ENCODE measurements at regions of chr10 and their contacts with region 1.

Region 1: GRCh38 chr10:21732067-21732772 is 198.2 kb downstream of the MLLT10 start:
- DNase-seq: peak; percentile 44
- ATAC-seq: peak; percentile 95
- H3K4me3 ChIP-seq: no peak overlapping the region
- H3K27ac ChIP-seq: no peak overlapping the region
- H3K4me1 ChIP-seq: peaks cover 5 to 19% of the 10 kb centered on the region in 2 experiments
- H3K27me3 ChIP-seq: no peaks in the 10 kb centered on the region
- CTCF ChIP-seq: peak; percentile 68 to 95 (median 94)
- POLR2A ChIP-seq: no peak
- RAD21 ChIP-seq: peak; percentile 93

Region 2: DNA sequence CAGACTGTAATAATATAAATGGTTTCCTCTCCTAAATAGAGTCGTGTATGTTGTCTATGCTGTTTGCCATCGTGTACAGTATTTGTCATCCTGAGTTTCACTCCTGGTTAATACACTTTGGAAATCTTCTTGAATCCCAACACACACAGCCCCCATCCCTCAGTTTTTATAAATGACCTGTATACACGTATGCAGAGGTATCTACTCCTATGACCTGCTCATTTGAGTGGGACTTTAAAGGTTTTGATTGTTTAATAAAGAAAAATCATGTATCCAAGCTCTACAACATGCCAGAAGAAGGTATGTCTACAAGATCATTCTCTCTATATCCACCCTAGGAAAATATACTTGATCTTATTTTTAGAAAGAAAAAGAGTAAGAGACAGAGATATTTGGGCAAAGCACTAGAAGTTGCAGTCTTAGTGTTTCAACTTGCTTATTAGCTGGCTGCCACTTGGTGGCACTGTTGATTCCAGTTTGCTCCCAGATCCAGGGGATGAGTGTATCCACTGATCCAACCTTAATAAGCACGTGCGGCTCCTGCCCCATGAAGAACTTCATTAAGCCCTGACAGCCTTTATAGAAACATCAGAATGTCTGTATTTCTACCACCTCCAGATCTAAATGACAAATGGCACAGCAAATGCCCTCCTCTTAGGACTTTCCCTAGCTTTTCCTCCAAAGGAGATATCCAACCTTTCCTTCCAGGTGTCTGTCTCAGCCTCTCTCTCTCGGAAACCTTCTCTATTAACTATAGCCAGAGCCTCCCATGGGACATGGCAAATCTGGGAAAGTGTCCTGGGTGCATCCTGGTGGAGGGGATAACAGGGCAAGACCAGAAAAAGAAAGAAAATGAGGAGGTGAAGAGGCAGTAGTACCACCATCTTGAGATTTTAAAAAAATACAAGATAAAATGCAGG is 653.5 kb before region 1 on chr10:
- CTCF ChIA-PET with region 1: no interaction called
- POLR2A ChIA-PET with region 1: no interaction called
- RAD21 ChIA-PET with region 1: no interaction called
- intact Hi-C with region 1: loop called (anchors 5 kb)
- DNase-seq: peak; percentile 58
- ATAC-seq: peak; percentile 98
- H3K4me3 ChIP-seq: no peak overlapping the region
- H3K27ac ChIP-seq: no peak overlapping the region
- H3K4me1 ChIP-seq: peaks cover 0 to 6% of the 10 kb centered on the region in 2 experiments; a peak in 2 of 4 replicates
- H3K27me3 ChIP-seq: no peaks in the 10 kb centered on the region
- CTCF ChIP-seq: peak; percentile 64 to 84 (median 79)
- POLR2A ChIP-seq: no peak
- RAD21 ChIP-seq: peak; percentile 87

Region 3: GRCh38 chr10:21292763-21293517 is 439.3 kb before region 1 on chr10:
- CTCF ChIA-PET with region 1: no interaction called
- POLR2A ChIA-PET with region 1: no interaction called
- RAD21 ChIA-PET with region 1: no interaction called
- intact Hi-C with region 1: loop called (anchors 5 kb)
- DNase-seq: peak; percentile 95
- ATAC-seq: peak; percentile 91
- H3K4me3 ChIP-seq: peak overlapping the region; percentile 9 to 32
- H3K27ac ChIP-seq: peak overlapping the region; percentile 66
- H3K4me1 ChIP-seq: peaks cover 35 to 40% of the 10 kb centered on the region in 2 experiments
- H3K27me3 ChIP-seq: no peaks in the 10 kb centered on the region
- CTCF ChIP-seq: no peak
- POLR2A ChIP-seq: no peak
- RAD21 ChIP-seq: peak; percentile 29

Region 4: DNA sequence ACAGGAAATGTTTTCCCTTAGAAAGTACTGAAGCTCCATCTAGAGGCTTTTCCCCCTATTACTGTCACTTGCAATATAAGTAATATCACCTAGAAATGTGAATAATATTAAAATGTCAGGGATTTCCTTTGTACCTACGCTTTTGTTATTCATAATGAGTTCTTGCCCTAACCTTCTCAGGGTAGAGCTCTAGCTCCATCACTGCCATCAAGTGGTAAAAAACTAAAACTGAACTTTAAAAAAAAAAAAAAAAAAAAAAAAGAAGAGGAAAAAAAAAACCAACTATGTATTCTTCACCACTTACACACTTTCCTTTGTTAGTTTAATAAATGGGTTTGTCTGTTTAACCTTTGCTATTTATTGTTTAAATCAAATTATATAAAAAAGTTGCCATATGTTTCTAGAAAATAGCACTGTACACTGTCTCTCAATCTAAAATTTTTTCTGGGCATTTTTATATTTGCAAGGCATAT is 221.4 kb after region 1 on chr10:
- CTCF ChIA-PET with region 1: interaction called, 4 read pairs
- POLR2A ChIA-PET with region 1: no interaction called
- RAD21 ChIA-PET with region 1: no interaction called
- intact Hi-C with region 1: loop called (anchors 1 kb)
- DNase-seq: peak; percentile 53
- ATAC-seq: peak; percentile 72
- H3K4me3 ChIP-seq: no peak overlapping the region
- H3K27ac ChIP-seq: no peak overlapping the region
- H3K4me1 ChIP-seq: peaks cover 0 to 4% of the 10 kb centered on the region in 2 experiments; a peak in 1 of 4 replicates
- H3K27me3 ChIP-seq: no peaks in the 10 kb centered on the region
- CTCF ChIP-seq: peak; percentile 25 to 61 (median 50); a peak in 4 of 6 replicates
- POLR2A ChIP-seq: no peak
- RAD21 ChIP-seq: peak; percentile 65